Heart left ventricle (tissue), 16 donors: ENCODE measurements at regions of chr5 and their contacts with region 1.

Region 1: DNA sequence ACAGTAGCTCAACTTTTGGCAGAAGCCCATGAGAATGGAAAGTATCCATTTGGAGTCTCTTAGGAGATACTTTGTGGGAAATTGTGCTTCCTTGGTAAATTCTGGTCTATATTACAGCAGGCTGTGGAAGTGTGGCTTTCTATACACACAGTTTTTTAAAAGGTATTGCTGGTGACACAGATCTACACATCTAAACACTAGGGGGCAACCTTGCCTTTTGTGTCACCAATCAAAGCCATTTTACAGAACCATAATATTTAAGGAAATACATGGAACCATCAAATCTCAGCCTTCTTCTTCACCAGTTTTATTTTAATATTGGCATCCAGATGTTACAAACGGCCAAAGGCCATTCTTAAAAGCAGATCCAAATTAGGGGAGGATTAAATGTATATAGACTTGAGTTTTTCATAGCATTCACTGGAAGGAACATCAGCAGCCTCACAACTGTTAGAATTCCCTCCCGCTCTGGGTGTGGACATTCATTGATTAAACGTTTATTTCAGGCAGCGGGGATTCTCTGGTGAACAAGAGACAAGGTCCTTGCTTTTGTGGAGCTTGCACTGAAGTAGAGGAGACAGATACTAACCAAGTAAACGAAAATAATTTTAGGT is 132.4 kb upstream of the EPB41L4A start:
- DNase-seq: peak in 2 of 5 donors; percentile 29 to 48
- ATAC-seq: peak in 2 of 4 donors; percentile 55 to 61
- H3K4me3 ChIP-seq: no peak overlapping the region
- H3K27ac ChIP-seq: no peak overlapping the region
- H3K4me1 ChIP-seq: peaks cover 0 to 33% (median 10%) of the 10 kb centered on the region in 12 donors
- H3K27me3 ChIP-seq: no peaks in the 10 kb centered on the region
- CTCF ChIP-seq: peak; percentile 67 to 87 (median 82)
- POLR2A ChIP-seq: no peak

Region 2: DNA sequence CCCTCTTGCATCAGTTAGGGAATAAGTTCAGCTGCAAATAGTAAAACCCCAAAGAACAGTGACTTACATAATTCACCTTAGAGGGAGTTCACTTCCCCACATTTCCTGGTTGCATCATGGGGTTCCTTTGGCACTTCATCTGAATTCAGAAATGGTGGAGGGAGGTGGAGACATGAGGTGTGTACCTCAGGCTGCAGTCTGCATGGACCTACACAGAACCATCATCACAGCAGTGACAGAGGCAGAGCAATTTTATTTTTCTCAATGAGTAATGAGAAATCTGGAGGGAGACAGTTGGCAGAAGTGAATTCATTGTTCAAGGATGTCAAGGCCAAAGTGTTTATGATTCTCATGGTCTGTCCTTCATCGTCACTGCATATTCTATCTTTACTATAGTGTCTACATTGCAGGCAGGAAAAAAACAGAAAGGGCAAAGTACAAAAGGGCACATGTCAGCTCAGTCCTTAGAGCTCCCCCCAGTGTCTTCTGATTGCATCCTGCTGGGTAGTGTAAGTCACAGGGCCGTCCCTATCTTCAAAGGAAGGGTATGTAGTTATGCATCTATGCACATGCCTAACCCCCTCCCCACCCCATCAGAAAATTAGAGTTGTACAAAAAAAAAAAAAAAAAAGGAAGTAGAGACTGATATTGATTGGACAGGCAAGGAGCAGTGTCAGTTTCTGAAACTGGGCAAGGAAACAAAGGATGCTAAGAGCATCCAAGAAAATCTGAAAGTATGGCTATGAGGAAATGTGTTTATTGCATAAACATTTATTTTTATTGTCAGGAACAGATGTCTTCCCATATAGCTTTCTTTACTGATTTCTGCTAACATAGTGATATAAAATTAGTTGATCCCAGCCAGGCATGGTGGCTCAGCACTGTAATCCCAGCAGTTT is 53.5 kb after region 1 on chr5:
- intact Hi-C with region 1: loop called in 4 of 10 experiments (anchors 5 to 10 kb)
- DNase-seq: no peak
- ATAC-seq: no peak
- H3K4me3 ChIP-seq: no peak overlapping the region
- H3K27ac ChIP-seq: no peak overlapping the region
- H3K4me1 ChIP-seq: peaks cover 0 to 3% (median 0%) of the 10 kb centered on the region in 12 donors
- H3K27me3 ChIP-seq: no peaks in the 10 kb centered on the region
- CTCF ChIP-seq: peak in 9 of 12 donors; percentile 6 to 43 (median 26)
- POLR2A ChIP-seq: no peak

Region 3: GRCh38 chr5:112616812-112617547 is 65.5 kb after region 1 on chr5:
- intact Hi-C with region 1: loop called in 1 of 10 experiments (anchors 10 kb)
- DNase-seq: no peak
- ATAC-seq: no peak
- H3K4me3 ChIP-seq: no peak overlapping the region
- H3K27ac ChIP-seq: no peak overlapping the region
- H3K4me1 ChIP-seq: no peaks in the 10 kb centered on the region
- H3K27me3 ChIP-seq: no peaks in the 10 kb centered on the region
- CTCF ChIP-seq: no peak
- POLR2A ChIP-seq: no peak

Region 4: DNA sequence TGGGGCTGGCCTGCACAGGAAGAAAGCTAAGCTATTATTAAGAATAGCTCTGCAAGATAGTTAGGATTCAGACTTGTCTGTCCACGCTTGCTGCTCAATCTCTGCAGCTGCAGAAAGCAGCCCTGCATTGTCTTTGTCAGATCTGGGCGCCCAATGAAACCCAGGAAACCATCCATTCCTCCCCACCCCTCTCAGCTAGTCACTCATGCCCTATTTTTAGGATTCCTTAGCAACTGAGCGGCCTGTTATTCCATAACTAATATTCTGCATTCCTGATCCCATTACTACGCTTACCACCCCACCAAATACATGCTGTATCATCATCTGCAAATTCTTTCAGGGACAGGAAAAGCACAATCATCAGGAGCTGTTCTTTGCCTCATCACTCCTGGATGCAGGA is 133.2 kb after region 1 on chr5:
- intact Hi-C with region 1: loop called in 1 of 10 experiments (anchors 10 kb)
- DNase-seq: peak in 4 of 5 donors; percentile 40 to 49 (median 42)
- ATAC-seq: peak; percentile 93 to 96 (median 95)
- H3K4me3 ChIP-seq: no peak overlapping the region
- H3K27ac ChIP-seq: peak overlapping the region; percentile 1 to 82 (median 58)
- H3K4me1 ChIP-seq: peaks cover 0 to 37% (median 17%) of the 10 kb centered on the region in 12 donors
- H3K27me3 ChIP-seq: no peaks in the 10 kb centered on the region
- CTCF ChIP-seq: no peak
- POLR2A ChIP-seq: no peak

Region 5: DNA sequence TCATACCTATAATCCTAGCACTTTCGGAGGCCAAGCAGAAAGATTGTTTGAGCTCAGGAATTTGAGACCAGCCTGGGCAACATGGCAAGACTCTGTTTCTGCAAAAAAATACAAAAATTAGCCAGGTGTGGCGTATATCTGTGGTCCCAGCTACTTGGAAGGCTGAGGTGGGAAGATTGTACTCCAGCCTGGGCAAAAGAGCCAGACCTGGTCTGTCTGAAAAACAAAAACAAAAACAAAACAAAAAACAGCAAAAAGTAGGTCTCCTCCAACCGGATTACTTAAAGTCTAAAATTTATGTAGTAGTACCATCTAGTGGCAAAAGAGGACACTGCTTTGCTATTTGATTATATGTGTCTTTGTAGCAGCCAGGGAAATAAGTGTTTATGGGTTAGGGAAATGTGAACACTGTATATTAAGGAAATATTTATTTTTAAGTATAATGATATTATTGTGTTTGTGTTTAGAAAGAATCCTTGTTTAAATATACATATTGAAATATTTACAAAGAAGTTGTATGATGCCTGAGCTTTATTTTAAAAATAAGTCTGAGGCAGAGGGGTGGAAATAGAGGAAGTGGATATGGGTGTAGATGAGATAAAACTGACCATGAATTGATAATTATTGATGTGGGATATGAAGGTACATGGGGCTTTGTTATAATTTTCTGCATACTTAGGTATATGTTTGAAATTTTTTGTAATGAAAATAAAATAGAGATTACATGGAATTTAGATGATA is 206.1 kb after region 1 on chr5:
- intact Hi-C with region 1: loop called (anchors 1 to 2 kb)
- DNase-seq: no peak
- ATAC-seq: peak; percentile 55 to 85 (median 78)
- H3K4me3 ChIP-seq: peak overlapping the region in 2 of 12 donors; percentile 20 to 23
- H3K27ac ChIP-seq: peak overlapping the region in 3 of 12 donors; percentile 14 to 30 (median 30)
- H3K4me1 ChIP-seq: peaks cover 0 to 17% (median 6%) of the 10 kb centered on the region in 12 donors
- H3K27me3 ChIP-seq: no peaks in the 10 kb centered on the region
- CTCF ChIP-seq: peak; percentile 56 to 90 (median 82)
- POLR2A ChIP-seq: no peak

Region 6: GRCh38 chr5:112848116-112848811 is 296.7 kb after region 1 on chr5:
- intact Hi-C with region 1: loop called in 4 of 10 experiments (anchors 5 to 10 kb)
- DNase-seq: no peak
- ATAC-seq: peak; percentile 74 to 94 (median 90)
- H3K4me3 ChIP-seq: no peak overlapping the region
- H3K27ac ChIP-seq: no peak overlapping the region
- H3K4me1 ChIP-seq: peaks cover 0 to 15% (median 0%) of the 10 kb centered on the region in 12 donors
- H3K27me3 ChIP-seq: no peaks in the 10 kb centered on the region
- CTCF ChIP-seq: peak; percentile 45 to 76 (median 59)
- POLR2A ChIP-seq: no peak